Naive thymus-derived CD4-positive, alpha-beta T cell (primary cell): ENCODE measurements at regions of chr3 and their contacts with region 1.

Region 1: GRCh38 chr3:105707009-105707408 is 161.8 kb downstream of the CBLB start:
- DNase-seq: no peak
- ATAC-seq: no peak
- H3K4me3 ChIP-seq: no peak overlapping the region
- H3K4me3 Mint-ChIP-seq: no peak overlapping the region
- H3K27ac ChIP-seq: no peak overlapping the region
- H3K27ac Mint-ChIP-seq: peak overlapping the region in 3 of 9 donors; percentile 24 to 59 (median 33)
- H3K4me1 ChIP-seq: no peaks in the 10 kb centered on the region
- H3K4me1 Mint-ChIP-seq: peaks cover 0 to 23% (median 11%) of the 10 kb centered on the region in 7 donors
- H3K27me3 ChIP-seq: no peaks in the 10 kb centered on the region
- H3K27me3 Mint-ChIP-seq: no peaks in the 10 kb centered on the region

Region 2: GRCh38 chr3:105691633-105692032 is 15.4 kb before region 1 on chr3:
- CTCF ChIA-PET with region 1: no interaction called
- POLR2A ChIA-PET with region 1: interaction called, 3 read pairs
- intact Hi-C with region 1: loop called in 1 of 2 experiments (anchors 2 kb)
- DNase-seq: no peak
- ATAC-seq: no peak
- H3K4me3 ChIP-seq: no peak overlapping the region
- H3K4me3 Mint-ChIP-seq: no peak overlapping the region
- H3K27ac ChIP-seq: no peak overlapping the region
- H3K27ac Mint-ChIP-seq: peak overlapping the region in 8 of 9 donors; percentile 16 to 82 (median 43)
- H3K4me1 ChIP-seq: peaks cover 3 to 5% of the 10 kb centered on the region in 2 donors
- H3K4me1 Mint-ChIP-seq: peaks cover 15 to 54% (median 42%) of the 10 kb centered on the region in 7 donors
- H3K27me3 ChIP-seq: no peaks in the 10 kb centered on the region
- H3K27me3 Mint-ChIP-seq: no peaks in the 10 kb centered on the region

Region 3: GRCh38 chr3:105722943-105723556 is 16.0 kb after region 1 on chr3:
- CTCF ChIA-PET with region 1: no interaction called
- POLR2A ChIA-PET with region 1: no interaction called
- intact Hi-C with region 1: loop called in 1 of 2 experiments (anchors 2 kb)
- DNase-seq: peak in 1 of 9 donors; percentile 10
- ATAC-seq: peak; percentile 84
- H3K4me3 ChIP-seq: no peak overlapping the region
- H3K4me3 Mint-ChIP-seq: peak overlapping the region in 2 of 10 donors; percentile 47 to 56
- H3K27ac ChIP-seq: no peak overlapping the region
- H3K27ac Mint-ChIP-seq: peak overlapping the region in 4 of 9 donors; percentile 35 to 75 (median 49)
- H3K4me1 ChIP-seq: peaks cover 6% of the 10 kb centered on the region in 2 donors
- H3K4me1 Mint-ChIP-seq: peaks cover 8 to 43% (median 28%) of the 10 kb centered on the region in 7 donors
- H3K27me3 ChIP-seq: no peaks in the 10 kb centered on the region
- H3K27me3 Mint-ChIP-seq: no peaks in the 10 kb centered on the region

Region 4: GRCh38 chr3:106629215-106629832 is 922.3 kb after region 1 on chr3:
- CTCF ChIA-PET with region 1: no interaction called
- POLR2A ChIA-PET with region 1: no interaction called
- intact Hi-C with region 1: no loop called
- DNase-seq: no peak
- ATAC-seq: no peak
- H3K4me3 ChIP-seq: no peak overlapping the region
- H3K4me3 Mint-ChIP-seq: no peak overlapping the region
- H3K27ac ChIP-seq: no peak overlapping the region
- H3K27ac Mint-ChIP-seq: no peak overlapping the region
- H3K4me1 ChIP-seq: no peaks in the 10 kb centered on the region
- H3K4me1 Mint-ChIP-seq: no peaks in the 10 kb centered on the region
- H3K27me3 ChIP-seq: no peaks in the 10 kb centered on the region
- H3K27me3 Mint-ChIP-seq: peaks cover 0 to 5% (median 4%) of the 10 kb centered on the region in 5 donors